CD14-positive monocyte (primary cell): ENCODE measurements at regions of chr10 and their contacts with region 1.

Region 1: GRCh38 chr10:11270135-11270857 is 252.6 kb downstream of the CELF2 start:
- DNase-seq: peak in 1 of 3 donors; percentile 15
- H3K4me3 ChIP-seq: no peak overlapping the region
- H3K4me3 Mint-ChIP-seq: no peak overlapping the region
- H3K27ac ChIP-seq: peak overlapping the region in 1 of 2 donors; percentile 48
- H3K27ac Mint-ChIP-seq: peak overlapping the region in 5 of 7 donors; percentile 23 to 70 (median 50)
- H3K4me1 ChIP-seq: no peaks in the 10 kb centered on the region
- H3K4me1 Mint-ChIP-seq: no peaks in the 10 kb centered on the region
- H3K27me3 ChIP-seq: no peaks in the 10 kb centered on the region
- H3K27me3 Mint-ChIP-seq: peaks cover 0 to 1% (median 0%) of the 10 kb centered on the region in 3 donors
- CTCF ChIP-seq: peak; percentile 79

Region 2: DNA sequence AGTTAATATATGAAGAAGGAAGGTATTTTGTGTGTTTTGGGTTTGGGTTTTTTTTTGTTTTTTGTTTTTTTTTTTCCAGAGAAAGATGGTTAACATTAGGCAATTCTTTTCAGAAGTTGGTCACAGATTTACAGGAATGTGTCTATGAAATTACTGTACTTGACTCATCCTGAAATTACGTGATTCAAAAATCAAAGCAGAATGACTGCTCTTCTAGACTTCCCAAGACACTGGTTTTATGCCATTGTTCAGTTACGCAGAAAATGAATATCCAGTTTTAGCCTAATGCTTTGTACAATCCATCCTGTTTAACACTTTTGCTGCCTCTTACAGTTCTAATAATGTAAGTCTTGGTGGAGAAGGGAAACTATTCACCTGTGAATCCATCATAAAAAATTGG is 292.3 kb before region 1 on chr10:
- intact Hi-C with region 1: no loop called
- DNase-seq: no peak
- H3K4me3 ChIP-seq: no peak overlapping the region
- H3K4me3 Mint-ChIP-seq: no peak overlapping the region
- H3K27ac ChIP-seq: no peak overlapping the region
- H3K27ac Mint-ChIP-seq: no peak overlapping the region
- H3K4me1 ChIP-seq: no peaks in the 10 kb centered on the region
- H3K4me1 Mint-ChIP-seq: no peaks in the 10 kb centered on the region
- H3K27me3 ChIP-seq: no peaks in the 10 kb centered on the region
- H3K27me3 Mint-ChIP-seq: peaks cover 4 to 10% (median 5%) of the 10 kb centered on the region in 3 donors
- CTCF ChIP-seq: no peak

Region 3: DNA sequence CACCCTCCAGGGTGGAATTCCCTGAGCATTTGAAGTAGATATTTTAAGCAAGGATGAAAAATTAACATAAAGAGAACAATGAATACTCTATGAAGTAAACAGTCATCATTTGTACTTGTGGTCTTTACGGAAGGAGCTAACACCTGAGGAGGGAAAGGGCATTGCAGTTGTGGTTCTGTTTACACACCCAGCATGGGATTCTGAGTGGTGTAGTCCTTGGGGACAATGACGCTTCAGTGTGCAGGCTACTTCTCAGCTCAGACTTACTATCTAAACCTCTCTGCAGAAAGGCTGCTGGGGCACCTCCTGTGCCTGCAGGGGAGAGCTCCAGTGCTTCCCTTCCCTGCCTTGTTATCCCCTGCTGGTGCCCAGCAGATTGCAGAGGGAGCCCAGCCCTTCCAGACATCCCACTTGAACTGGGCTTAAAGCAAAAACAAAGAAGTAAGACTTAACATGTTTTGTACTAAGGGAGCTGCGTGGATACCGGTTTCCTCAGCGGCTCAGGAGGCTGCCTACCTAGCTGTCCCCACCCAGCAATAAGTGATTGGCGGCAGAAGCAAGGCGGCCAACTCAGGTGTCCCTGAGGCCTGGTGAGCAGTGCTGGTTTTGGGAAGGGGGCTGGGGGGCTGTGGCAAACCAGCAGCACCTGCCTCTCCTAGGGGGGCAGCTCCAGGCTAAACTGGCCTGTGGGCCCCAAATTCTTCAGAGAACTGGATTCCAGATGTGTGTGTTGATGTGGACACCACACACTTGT is 163.5 kb before region 1 on chr10:
- intact Hi-C with region 1: loop called in 1 of 2 experiments (anchors 10 kb)
- DNase-seq: no peak
- H3K4me3 ChIP-seq: no peak overlapping the region
- H3K4me3 Mint-ChIP-seq: no peak overlapping the region
- H3K27ac ChIP-seq: no peak overlapping the region
- H3K27ac Mint-ChIP-seq: no peak overlapping the region
- H3K4me1 ChIP-seq: no peaks in the 10 kb centered on the region
- H3K4me1 Mint-ChIP-seq: no peaks in the 10 kb centered on the region
- H3K27me3 ChIP-seq: no peaks in the 10 kb centered on the region
- H3K27me3 Mint-ChIP-seq: peaks cover 1 to 4% (median 2%) of the 10 kb centered on the region in 3 donors
- CTCF ChIP-seq: no peak

Region 4: DNA sequence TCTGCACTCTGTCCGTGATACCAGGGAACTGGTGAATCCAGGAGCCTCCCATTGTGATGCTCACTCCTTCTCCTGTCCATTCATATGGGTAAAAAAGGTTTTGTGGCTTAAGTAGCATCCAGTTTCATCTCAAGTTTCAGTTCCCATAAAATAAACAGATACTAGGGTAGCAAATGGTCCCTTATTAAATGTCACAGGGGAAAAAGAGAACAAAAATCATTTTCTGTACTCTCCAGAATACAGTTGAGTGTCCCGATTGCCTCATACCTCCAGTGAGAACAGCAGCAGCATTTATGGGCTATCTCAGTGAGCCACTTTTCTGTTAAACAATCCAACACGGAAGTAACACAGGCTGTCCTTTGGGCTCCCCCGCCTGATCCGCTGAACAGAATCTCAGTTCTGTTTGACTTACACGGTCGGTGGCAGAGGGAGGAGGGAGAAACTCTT is 73.0 kb before region 1 on chr10:
- intact Hi-C with region 1: no loop called
- DNase-seq: peak; percentile 83 to 94 (median 91)
- H3K4me3 ChIP-seq: no peak overlapping the region
- H3K4me3 Mint-ChIP-seq: no peak overlapping the region
- H3K27ac ChIP-seq: peak overlapping the region; percentile 48 to 67
- H3K27ac Mint-ChIP-seq: peak overlapping the region; percentile 86 to 93 (median 92)
- H3K4me1 ChIP-seq: peaks cover 47 to 58% of the 10 kb centered on the region in 2 donors
- H3K4me1 Mint-ChIP-seq: peaks cover 77% of the 10 kb centered on the region
- H3K27me3 ChIP-seq: no peaks in the 10 kb centered on the region
- H3K27me3 Mint-ChIP-seq: peaks cover 0 to 2% (median 0%) of the 10 kb centered on the region in 3 donors
- CTCF ChIP-seq: no peak